Posterior cingulate gyrus (tissue), 11 donors: ENCODE measurements at regions of chr13 and their contacts with region 1.

Region 1: DNA sequence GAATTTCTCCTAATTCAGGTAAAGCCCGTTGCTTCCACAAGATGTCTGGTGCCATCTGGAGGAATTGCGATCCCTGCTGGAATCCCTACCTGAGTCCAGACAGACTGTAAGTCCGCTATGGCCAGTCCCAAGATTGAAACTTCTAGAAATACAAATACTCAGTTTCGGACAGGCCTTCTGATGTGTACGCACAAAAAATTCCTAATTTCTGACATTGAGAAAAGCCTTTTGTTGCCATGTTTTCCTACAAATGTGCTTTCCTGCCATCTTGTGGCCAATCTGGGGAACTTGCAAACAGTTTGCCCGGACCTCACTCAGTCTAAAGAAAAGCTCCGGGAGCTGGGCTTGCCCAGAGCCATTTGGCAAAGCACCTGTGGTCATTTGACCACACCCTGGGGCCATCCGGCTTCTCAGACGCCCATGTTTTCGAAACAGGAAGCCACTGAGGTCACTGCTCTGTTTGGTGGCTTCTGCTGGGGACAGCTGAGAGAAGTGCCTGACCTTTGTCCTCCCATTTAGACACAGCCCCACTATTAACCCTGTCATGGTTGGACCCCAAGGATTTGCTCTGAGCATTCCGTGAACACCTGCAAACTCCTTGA is 79.4 kb downstream of the SLC15A1 start:
- DNase-seq: peak in 6 of 10 donors; percentile 22 to 90 (median 49)

Region 2: GRCh38 chr13:97855570-97856303 is 817.3 kb before region 1 on chr13:
- intact Hi-C with region 1: loop called (anchors 5 kb)
- DNase-seq: peak in 3 of 10 donors; percentile 31 to 55 (median 32)

Region 3: DNA sequence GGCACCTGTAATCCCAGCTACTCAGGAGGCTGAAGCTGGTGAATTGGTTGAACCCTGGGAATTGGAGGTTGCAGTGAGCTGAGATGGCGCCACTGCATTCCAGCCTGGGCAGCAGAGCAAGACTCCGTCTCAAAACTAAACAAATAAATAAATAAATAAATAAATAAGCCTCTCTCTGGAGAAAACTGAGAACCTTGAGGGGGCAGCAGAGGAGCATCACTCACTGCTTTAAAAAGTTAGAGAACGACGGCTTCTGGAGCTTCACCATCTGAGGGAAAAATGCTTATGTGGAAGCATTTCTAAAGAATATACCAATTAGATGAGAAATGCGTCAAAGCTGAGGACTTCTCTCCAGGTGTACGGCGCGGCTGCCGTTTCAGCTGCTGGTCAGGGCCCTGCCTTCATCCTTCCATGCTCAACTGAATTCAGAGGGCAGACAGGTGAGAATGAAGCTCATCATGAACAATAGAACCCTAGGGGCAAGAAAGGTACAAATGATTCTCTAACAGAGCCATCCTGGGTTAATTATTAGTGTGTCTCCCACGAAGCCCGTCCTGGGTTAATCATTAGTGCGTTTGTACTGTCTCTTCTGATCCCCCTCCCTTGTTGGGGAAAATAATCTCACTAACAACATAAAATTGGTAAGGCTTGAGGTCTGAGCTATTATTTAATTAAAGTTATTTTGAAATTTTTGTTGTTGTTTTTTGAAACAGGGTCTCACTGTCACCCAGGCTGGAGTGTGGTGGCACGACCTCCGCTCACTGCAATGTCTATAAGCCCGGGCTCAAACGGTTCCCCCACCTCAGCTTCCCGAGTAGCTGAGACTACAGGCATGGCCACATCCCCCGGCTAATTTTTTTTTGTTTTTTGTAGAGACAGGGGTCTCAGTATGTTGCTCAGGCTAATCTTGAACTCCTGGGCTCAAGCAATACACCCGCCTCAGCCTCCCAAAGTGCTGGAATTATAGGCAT is 639.5 kb before region 1 on chr13:
- intact Hi-C with region 1: loop called (anchors 10 kb)
- DNase-seq: peak in 3 of 10 donors; percentile 18 to 42 (median 36)

Region 4: GRCh38 chr13:98445340-98446233 is 227.5 kb before region 1 on chr13:
- intact Hi-C with region 1: loop called (anchors 1 kb)
- DNase-seq: peak in 9 of 10 donors; percentile 61 to 95 (median 75)